ENCODE measurements at regions of chr1 and their contacts with region 1.

Region 1: GRCh38 chr1:44049839-44050238 is 18.6 kb upstream of the SLC6A9 start:
- DNase-seq: no peak
- H3K4me3 Mint-ChIP-seq: no peak overlapping the region
- H3K27ac Mint-ChIP-seq: no peak overlapping the region
- H3K4me1 Mint-ChIP-seq: peaks cover 14% of the 10 kb centered on the region
- H3K27me3 Mint-ChIP-seq: peaks cover 14% of the 10 kb centered on the region

Region 2: GRCh38 chr1:43529206-43529731 is 520.6 kb before region 1 on chr1:
- CTCF ChIA-PET with region 1: interaction called, 10 read pairs
- DNase-seq: peak; percentile 84
- H3K4me3 Mint-ChIP-seq: no peak overlapping the region
- H3K27ac Mint-ChIP-seq: no peak overlapping the region
- H3K4me1 Mint-ChIP-seq: peaks cover 16% of the 10 kb centered on the region
- H3K27me3 Mint-ChIP-seq: peaks cover 83% of the 10 kb centered on the region

Region 3: GRCh38 chr1:44036409-44037139 is 13.3 kb before region 1 on chr1:
- CTCF ChIA-PET with region 1: interaction called, 28 read pairs
- DNase-seq: peak; percentile 79
- H3K4me3 Mint-ChIP-seq: no peak overlapping the region
- H3K27ac Mint-ChIP-seq: no peak overlapping the region
- H3K4me1 Mint-ChIP-seq: peaks cover 12% of the 10 kb centered on the region
- H3K27me3 Mint-ChIP-seq: peaks cover 15% of the 10 kb centered on the region

Region 4: DNA sequence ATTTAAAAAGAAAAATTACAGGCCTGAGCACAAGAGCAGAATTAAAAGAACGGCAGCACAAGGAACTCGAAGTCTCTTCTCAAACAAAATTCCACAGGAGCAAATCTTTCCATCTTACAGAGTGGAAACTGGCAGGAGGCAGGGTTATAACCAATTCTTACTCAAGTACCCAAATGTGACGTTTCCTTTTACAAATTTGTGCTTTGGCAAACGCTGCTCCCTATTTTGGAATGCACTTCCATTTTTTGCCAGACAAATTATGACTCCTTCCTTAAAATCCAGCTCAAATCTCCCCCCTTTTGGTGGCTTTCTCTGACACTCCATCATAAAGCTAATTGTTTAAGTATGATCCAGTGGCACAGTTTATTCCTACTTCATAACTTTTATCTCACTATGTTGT is 297.4 kb after region 1 on chr1:
- CTCF ChIA-PET with region 1: no interaction called
- DNase-seq: no peak
- H3K4me3 Mint-ChIP-seq: no peak overlapping the region
- H3K27ac Mint-ChIP-seq: no peak overlapping the region
- H3K4me1 Mint-ChIP-seq: no peaks in the 10 kb centered on the region
- H3K27me3 Mint-ChIP-seq: no peaks in the 10 kb centered on the region